ENCODE measurements at regions of chr1 and their contacts with region 1.

Region 1: GRCh38 chr1:932776-933602 is 9.3 kb downstream of the SAMD11 start:
- H3K4me3 ChIP-seq: no peak overlapping the region
- H3K27ac ChIP-seq: peak overlapping the region; percentile 82; the same call in 1 of the 2 replicates
- H3K4me1 ChIP-seq: peaks cover 30% of the 10 kb centered on the region
- CTCF ChIP-seq: no peak

Region 2: GRCh38 chr1:921011-921837 is 11.8 kb before region 1 on chr1:
- CTCF ChIA-PET with region 1: interaction called, 17 read pairs
- POLR2A ChIA-PET with region 1: interaction called, 106 read pairs
- H3K4me3 ChIP-seq: no peak overlapping the region
- H3K27ac ChIP-seq: peak overlapping the region; percentile 63
- H3K4me1 ChIP-seq: peaks cover 27% of the 10 kb centered on the region
- CTCF ChIP-seq: peak; percentile 86